IMR-90 (cell line): ENCODE measurements at regions of chr1 and their contacts with region 1.

Region 1: DNA sequence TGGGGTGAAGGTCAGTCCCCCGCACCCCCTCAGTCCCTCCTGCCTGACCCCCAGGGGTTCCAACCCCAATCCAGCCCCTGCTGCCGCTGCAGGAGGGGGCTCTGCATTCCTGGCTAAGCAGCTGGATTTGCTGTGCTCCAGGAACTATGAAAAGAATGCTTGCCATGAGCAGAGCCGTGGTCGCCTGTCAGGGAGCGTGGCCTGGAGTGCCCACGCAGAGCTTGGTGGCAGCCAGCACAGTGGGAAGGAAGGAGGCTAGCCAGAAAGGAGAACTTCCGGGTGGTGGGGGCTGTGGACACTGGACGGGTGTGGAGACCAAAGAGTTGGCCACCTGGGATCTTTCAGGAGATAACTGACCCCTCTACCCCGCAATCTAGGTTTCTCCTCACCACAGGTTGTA is 5.6 kb downstream of the COL8A2 start:
- DNase-seq: no peak
- ATAC-seq: peak; percentile 69
- H3K4me3 ChIP-seq: no peak overlapping the region
- H3K27ac ChIP-seq: no peak overlapping the region
- H3K4me1 ChIP-seq: peaks cover 13% of the 10 kb centered on the region
- H3K27me3 ChIP-seq: peaks cover 18% of the 10 kb centered on the region
- CTCF ChIP-seq: no peak
- POLR2A ChIP-seq: no peak
- RAD21 ChIP-seq: no peak

Region 2: DNA sequence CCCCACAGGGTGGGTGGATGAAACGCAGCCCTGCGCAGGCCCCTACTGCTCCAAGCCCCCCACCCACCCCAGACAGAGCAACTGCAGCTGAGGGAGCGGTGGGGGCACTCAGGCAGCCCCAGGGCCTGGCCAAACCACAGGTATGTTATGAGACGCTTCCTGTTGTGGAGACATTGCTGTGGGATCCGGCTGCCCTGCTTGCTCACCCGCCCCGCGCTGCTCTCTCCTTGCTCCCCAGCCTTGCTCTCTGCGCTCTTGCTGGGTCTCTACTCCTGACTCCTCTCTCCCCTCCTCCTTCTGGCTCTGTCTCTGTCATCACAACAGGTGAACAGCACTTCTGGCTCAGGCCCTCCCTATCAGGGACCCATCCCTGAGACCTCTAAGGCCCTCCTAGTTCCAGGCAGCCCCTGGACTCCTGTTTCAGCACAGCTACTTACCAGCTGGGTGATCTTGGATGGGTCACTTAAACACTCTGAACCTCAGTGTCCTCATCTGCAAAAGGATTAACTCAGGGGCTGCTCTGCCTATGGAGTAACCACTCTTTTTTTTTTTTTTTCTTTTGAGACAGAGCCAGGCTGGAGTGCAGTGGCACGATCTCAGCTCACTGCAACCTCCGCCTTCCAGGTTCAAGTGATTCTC is 10.3 kb before region 1 on chr1:
- CTCF ChIA-PET with region 1: no interaction called
- POLR2A ChIA-PET with region 1: no interaction called
- dilution Hi-C with region 1: no loop called
- in situ Hi-C with region 1: no loop called
- intact Hi-C with region 1: no loop called
- DNase-seq: peak; percentile 78
- ATAC-seq: peak; percentile 79
- H3K4me3 ChIP-seq: no peak overlapping the region
- H3K27ac ChIP-seq: no peak overlapping the region
- H3K4me1 ChIP-seq: peaks cover 2% of the 10 kb centered on the region
- H3K27me3 ChIP-seq: no peaks in the 10 kb centered on the region
- CTCF ChIP-seq: no peak
- POLR2A ChIP-seq: no peak
- RAD21 ChIP-seq: no peak

Region 3: DNA sequence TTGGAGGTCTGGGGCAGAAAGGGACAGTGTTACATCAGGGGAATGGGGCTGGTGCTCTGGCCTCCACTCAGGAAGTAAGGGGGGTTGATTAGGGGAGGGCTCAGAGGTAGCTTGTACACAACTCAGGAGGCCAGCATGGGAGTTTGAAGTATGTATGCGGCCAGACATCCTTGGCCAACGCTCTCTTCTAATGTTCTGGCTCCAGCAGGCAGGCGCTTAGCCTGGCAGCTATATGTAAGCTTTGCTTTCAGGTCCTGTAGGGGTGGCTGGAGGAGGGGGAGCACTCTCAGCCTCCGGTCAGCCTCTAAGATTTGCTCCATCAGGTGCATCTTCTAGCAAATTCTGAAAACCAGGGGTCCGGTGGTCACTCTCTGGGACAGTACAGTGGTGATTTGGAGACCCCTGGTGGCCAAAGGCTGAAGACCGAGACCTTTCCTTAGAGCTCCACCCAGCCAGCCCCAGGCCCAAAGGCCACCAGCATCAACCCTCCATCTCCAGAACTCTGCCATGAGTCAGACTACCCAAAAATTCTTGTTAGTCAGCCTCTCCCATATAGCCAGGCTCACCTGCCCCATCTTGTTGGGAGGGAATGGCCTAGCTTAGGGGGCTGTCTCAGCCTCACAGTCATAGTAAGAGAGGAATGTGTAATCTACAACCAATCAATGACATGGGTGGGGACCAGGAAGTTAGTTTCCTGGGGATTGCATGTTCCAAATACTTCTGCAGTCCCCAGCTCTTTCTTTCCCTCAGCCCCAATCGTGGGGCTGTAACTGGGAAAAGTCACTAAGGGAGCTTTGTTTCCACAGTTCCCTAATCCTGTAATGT is 15.3 kb after region 1 on chr1:
- CTCF ChIA-PET with region 1: interaction called, 21 read pairs
- POLR2A ChIA-PET with region 1: no interaction called
- dilution Hi-C with region 1: no loop called
- in situ Hi-C with region 1: no loop called
- intact Hi-C with region 1: no loop called
- DNase-seq: peak; percentile 38
- ATAC-seq: peak; percentile 40
- H3K4me3 ChIP-seq: no peak overlapping the region
- H3K27ac ChIP-seq: no peak overlapping the region
- H3K4me1 ChIP-seq: peaks cover 26% of the 10 kb centered on the region
- H3K27me3 ChIP-seq: no peaks in the 10 kb centered on the region
- CTCF ChIP-seq: peak; percentile 64
- POLR2A ChIP-seq: no peak
- RAD21 ChIP-seq: peak; percentile 76

Region 4: GRCh38 chr1:36239941-36240637 is 120.6 kb after region 1 on chr1:
- CTCF ChIA-PET with region 1: no interaction called
- POLR2A ChIA-PET with region 1: no interaction called
- dilution Hi-C with region 1: no loop called
- in situ Hi-C with region 1: no loop called
- intact Hi-C with region 1: no loop called
- DNase-seq: peak; percentile 45
- ATAC-seq: peak; percentile 38
- H3K4me3 ChIP-seq: no peak overlapping the region
- H3K27ac ChIP-seq: peak overlapping the region; percentile 19; the same call in 1 of the 2 replicates
- H3K4me1 ChIP-seq: peaks cover 13% of the 10 kb centered on the region
- H3K27me3 ChIP-seq: no peaks in the 10 kb centered on the region
- CTCF ChIP-seq: no peak
- POLR2A ChIP-seq: no peak
- RAD21 ChIP-seq: no peak